ENCODE measurements at regions of chr5 and their contacts with region 1.

Region 1: DNA sequence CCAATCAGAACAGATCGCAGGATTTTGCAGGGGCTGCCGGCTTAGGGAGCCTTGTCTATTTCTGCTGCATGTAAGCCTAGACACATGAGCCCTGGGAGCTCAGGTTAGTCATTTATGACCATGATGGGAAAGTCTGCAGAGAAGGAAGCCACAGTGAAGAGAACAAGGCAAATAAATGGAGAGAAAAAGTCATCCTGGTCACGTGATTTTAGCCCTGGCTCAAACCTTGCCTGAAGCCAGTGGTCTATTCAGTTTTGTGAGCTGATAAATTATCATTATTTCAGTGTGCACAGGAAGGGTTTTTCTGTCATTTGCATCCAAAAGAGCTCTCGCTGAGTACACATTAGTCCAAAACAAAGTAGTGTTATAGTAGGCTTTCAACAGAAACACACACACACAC is 181.7 kb downstream of the NSG2 start:
- DNase-seq: no peak
- H3K4me3 ChIP-seq: no peak overlapping the region
- CTCF ChIP-seq: no peak
- POLR2A ChIP-seq: no peak

Region 2: DNA sequence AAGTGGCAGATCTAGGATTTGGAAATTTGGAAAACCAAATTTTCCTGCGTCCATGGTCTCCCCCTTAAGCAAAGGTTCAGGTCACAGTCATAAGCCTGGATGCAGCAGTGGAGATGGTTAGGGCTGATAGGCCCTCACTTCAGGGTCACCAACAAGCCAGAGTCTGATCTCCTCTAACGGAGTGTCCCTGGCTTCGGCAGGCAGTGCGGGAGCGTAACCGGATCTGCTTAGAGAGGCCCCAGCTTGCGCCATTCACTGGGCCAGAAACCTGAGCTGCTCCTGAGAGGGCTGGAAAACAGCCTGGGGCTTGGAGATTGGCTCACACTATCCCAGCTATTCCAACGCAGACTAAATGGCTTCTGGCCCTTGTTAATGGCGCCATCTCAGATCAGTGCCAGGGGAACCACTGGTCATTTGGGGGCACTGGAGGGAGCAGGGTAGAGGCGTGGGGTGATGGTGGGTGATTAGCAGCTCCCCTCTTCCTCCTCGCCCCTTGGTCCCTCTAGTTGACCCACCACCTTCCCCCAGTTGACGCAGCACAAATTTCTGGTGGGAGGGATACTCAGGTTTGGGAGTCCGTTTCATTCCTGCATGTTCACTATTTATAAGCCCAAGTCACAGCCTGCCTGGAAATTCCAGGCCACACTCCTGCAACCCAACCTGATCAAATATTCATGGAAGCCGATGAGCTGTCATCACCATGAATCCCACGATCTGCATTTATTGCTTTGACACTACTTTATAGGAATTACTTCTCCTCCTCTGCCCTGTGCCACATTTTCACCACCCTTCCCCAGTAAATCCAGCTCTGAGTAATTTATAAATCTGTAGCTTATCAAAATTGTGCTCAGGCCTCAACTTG is 473.7 kb before region 1 on chr5:
- intact Hi-C with region 1: no loop called
- DNase-seq: no peak
- H3K4me3 ChIP-seq: no peak overlapping the region
- CTCF ChIP-seq: no peak
- POLR2A ChIP-seq: no peak

Region 3: DNA sequence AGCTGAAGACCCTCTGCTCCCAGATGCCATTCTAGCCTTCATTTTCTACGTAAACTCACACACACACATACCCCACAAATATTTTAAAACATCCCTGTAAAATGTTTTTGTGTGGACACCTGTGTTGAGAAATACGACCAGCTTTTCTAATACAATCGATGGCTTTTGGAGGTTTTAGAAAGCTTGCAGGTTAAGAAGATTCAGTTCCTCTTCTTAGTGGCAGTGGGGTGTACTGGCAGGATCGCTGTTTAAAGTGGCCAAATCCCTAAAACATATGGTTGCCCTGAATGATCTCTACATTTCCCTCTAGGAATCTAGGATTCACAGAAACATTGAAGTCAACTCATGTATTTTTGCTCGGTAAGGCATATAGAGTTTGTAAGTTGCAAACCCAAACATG is 54.6 kb after region 1 on chr5:
- intact Hi-C with region 1: loop called (anchors 2 kb)
- DNase-seq: no peak
- H3K4me3 ChIP-seq: no peak overlapping the region
- CTCF ChIP-seq: no peak
- POLR2A ChIP-seq: no peak

Region 4: DNA sequence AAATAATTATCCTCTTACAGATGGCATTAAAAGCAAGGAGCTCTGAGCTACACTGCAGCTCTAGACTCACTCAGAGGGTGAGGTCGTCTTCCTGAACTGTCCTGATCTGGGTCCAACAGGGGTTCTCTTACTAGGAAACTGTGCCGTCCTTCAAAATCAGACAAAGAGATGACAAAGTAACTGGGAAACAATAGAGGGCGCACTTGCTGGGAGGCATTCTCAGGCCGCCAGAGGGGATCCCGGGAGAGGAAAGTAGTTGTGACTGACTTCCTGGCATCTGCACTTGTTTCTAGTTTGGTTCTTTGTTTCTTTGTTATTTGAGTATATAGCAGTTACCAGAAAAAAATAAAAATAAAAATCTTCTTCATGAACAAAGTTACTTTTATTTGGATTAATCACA is 354.3 kb after region 1 on chr5:
- intact Hi-C with region 1: no loop called
- DNase-seq: no peak
- H3K4me3 ChIP-seq: no peak overlapping the region
- CTCF ChIP-seq: no peak
- POLR2A ChIP-seq: no peak